ENCODE measurements at regions of chr6 and their contacts with region 1.

Region 1: GRCh38 chr6:24581084-24581669 is 64.8 kb downstream of the KIAA0319 start:
- H3K4me3 ChIP-seq: no peak overlapping the region
- H3K27ac ChIP-seq: no peak overlapping the region
- H3K4me1 ChIP-seq: peaks cover 12% of the 10 kb centered on the region
- CTCF ChIP-seq: peak; percentile 81

Region 2: GRCh38 chr6:24494821-24495795 is 86.1 kb before region 1 on chr6 and contains the start of gene ALDH5A1:
- CTCF ChIA-PET with region 1: interaction called, 21 read pairs
- POLR2A ChIA-PET with region 1: interaction called, 3 read pairs
- H3K4me3 ChIP-seq: peak within 1 kb of the TSS; percentile 60
- H3K27ac ChIP-seq: peak within 1 kb of the TSS; percentile 80
- H3K4me1 ChIP-seq: 0 out of 2 replicates have a peak, but pooled peaks cover 2% of the 10 kb centered on the region
- CTCF ChIP-seq: peak; percentile 91

Region 3: GRCh38 chr6:24566020-24566767 is 15.0 kb before region 1 on chr6:
- CTCF ChIA-PET with region 1: interaction called, 121 read pairs
- POLR2A ChIA-PET with region 1: interaction called, 3 read pairs
- H3K4me3 ChIP-seq: no peak overlapping the region
- H3K27ac ChIP-seq: no peak overlapping the region
- H3K4me1 ChIP-seq: no peaks in the 10 kb centered on the region
- CTCF ChIP-seq: no peak

Region 4: DNA sequence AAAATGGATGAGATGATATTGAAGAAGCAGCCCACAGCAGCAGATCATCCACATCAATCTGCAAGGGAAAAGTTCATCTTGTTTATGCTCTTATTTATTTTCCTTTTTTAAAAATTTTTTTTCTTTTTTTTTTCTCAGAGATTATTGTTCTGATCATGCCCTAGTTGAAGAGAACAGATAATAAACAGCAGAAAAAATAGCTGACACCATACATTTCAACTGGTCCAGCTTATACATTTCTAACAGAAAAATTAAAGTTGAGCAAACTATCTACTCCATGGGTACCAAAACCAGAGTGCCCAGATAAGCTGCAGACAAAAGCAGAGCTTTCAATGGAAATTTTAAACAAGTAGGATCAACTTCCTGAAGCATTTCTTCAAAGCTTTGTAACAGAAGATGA is 55.5 kb after region 1 on chr6:
- CTCF ChIA-PET with region 1: interaction called, 10 read pairs
- POLR2A ChIA-PET with region 1: no interaction called
- H3K4me3 ChIP-seq: no peak overlapping the region
- H3K27ac ChIP-seq: no peak overlapping the region
- H3K4me1 ChIP-seq: peaks cover 6% of the 10 kb centered on the region; the same call in 1 of the 2 replicates
- CTCF ChIP-seq: no peak

Region 5: DNA sequence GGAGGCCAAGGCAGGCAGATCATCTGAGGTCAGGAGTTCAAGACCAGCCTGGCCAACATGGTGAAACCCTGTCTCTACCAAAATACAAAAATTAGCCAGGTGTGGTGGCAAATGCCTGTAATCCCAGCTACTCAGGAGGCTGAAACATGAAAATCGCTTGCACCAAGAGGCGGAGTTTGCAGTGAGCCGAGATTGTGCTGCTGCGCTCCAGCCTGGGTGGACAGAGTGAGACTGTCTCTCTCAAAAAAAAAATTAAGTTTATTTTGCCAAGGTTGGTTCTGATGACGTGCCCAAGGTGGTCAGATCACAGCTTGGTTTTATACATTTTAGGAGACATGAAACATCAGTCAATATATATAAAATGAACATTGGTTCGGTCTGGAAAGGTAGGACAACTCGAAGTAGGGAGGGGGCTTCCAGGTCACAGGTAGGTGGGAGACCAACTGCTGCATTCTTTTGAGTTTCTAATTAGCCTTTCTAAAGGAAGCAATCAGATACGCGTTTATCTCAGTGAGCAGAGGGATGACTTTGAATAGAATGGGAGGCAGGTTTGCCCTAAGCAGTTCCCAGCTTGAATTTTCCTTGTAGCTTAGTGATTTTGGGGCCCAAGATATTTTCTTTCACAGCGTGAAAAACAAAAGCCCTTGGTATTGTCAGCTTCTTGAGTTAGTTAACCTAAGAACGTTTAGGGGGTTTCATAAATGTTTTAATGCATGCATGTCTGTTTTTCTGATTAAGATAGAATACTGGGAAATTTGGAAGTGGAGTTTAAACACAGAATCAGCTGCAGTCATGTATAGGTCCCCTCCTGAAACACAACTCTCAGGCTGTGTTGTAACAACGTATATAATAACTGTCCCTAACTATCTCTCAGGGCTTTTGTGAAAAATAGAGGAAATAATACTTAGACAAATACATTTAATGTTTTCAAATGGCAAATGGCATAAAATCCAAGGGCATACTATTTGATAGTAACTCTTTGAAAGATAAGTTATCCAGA is 102.4 kb after region 1 on chr6:
- CTCF ChIA-PET with region 1: interaction called, 18 read pairs
- POLR2A ChIA-PET with region 1: no interaction called
- H3K4me3 ChIP-seq: no peak overlapping the region
- H3K27ac ChIP-seq: no peak overlapping the region
- H3K4me1 ChIP-seq: 0 out of 2 replicates have a peak, but pooled peaks cover 2% of the 10 kb centered on the region
- CTCF ChIP-seq: no peak

Region 6: DNA sequence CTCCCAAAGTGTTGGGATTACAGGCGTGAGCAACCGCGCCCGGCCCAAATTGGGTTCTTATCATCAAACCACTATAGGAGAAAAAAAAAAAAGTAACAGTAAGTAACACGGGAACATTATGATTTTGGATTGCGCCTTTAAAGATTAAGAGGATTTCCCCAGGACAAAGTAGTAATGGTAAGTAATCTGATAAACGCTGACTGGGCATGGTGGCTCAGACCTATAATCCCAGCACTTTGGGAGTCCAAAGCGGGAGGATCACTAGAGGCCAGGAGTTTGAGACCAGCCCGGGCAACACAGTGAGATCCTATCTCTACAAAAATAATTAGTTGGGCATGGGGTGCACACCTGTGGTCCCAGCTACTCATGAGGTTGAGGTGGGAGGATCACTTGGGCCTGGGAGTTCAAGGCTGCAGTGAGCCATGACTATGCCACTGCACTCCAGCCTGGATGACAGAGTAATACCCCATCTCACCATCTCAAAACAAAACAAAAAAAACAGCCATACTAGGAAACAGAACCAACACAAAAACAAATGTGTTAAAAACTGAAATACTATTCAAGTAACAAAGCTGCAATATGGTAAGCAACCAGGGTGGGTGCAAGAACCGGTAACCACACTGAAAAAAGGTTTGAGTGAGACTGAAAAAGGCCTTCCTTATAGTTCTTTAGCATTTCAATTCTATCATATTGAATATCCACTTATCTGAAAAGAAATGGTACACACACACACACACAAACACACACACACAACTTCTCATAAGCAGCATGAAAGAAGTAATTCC is 129.5 kb after region 1 on chr6:
- CTCF ChIA-PET with region 1: interaction called, 12 read pairs
- POLR2A ChIA-PET with region 1: no interaction called
- H3K4me3 ChIP-seq: no peak overlapping the region
- H3K27ac ChIP-seq: no peak overlapping the region
- H3K4me1 ChIP-seq: no peaks in the 10 kb centered on the region
- CTCF ChIP-seq: no peak

Region 7: DNA sequence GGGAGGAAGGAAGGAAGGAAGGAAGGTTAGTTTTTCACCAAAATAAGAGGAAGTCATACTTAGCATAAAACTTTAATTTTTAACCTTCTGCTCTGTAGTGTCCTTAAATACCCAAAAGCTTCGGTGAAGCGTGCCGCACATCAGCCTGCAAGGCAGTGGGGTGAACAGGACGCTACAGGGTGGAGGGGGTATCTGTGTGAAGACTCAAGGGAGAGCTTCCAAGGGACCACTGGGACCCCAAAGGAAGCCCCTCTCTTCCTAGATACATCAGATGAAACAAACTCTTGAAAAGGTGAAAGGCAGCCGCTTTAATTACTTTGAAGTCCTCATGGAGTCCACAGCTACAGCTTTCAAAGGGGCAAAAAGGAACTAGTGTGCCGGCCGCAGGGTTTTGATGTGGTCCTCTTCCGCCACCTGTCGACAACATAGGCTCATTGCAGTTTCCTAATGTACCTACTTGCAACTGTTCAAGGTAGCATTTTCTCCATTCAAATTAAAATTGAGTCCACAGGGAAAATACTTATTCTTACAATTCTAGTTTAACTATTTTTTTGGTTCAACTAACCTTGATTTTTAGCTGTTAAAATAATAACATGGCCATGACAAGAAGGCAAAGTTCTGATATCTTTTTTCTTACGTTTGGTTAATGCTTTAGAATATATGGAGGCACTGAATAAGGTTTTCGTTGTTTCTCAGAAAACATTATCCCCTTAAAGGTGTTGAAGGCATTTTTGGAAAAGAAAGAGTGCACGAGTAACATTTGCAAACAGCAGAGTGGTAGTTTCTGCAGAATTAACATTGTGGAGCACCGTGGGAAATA is 489.6 kb after region 1 on chr6:
- CTCF ChIA-PET with region 1: interaction called, 10 read pairs
- POLR2A ChIA-PET with region 1: no interaction called
- H3K4me3 ChIP-seq: no peak overlapping the region
- H3K27ac ChIP-seq: no peak overlapping the region
- H3K4me1 ChIP-seq: no peaks in the 10 kb centered on the region
- CTCF ChIP-seq: peak; percentile 61